SK-N-SH (cell line): ENCODE measurements at regions of chr1 and their contacts with region 1.

Region 1: DNA sequence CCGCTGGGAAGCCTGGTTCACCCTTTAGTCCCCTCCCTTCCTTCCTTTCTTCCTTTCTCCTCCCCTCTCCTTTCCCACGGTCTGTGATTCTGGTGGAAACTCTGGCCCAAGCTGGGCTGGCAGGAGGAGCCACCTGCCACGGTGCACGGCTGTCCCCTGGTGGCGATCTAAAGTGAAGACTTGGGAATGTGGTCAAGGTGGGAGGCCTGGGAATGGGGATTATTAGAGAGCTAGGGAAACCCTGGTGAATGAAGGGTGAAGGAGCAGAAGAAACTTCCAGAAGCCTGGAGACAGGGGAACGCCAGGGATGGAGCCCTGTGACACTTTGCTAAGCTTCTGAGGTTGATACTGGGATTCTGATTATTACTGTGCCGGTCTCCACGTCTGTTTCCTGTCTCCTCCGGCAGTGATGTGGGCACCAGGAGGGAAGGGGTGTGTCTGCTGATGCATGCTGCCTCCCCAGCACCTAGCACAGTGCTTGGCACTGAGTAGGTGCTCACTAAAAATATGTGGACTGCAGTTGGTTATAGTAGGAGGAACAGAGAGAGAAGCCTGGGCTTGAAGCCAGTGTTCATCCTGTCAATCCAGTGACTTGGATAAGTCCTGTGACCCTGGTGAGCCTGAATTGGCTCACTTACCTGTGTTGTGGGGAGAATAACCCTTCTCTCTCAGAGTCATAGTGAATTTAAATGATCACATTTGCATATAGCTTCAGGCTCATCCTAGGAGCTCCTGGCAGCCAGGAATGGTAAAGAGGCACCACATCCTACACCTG is 71.2 kb upstream of the NBPF3 start:
- DNase-seq: peak; percentile 84
- H3K4me3 ChIP-seq: peak overlapping the region in 1 of 2 experiments; percentile 51; a peak in 1 of 4 replicates
- H3K27ac ChIP-seq: no peak overlapping the region
- H3K4me1 ChIP-seq: no peaks in the 10 kb centered on the region; a peak in 1 of 4 replicates
- H3K27me3 ChIP-seq: no peaks in the 10 kb centered on the region
- CTCF ChIP-seq: peak; percentile 99
- EP300 ChIP-seq: no peak
- RAD21 ChIP-seq: peak; percentile 100

Region 2: DNA sequence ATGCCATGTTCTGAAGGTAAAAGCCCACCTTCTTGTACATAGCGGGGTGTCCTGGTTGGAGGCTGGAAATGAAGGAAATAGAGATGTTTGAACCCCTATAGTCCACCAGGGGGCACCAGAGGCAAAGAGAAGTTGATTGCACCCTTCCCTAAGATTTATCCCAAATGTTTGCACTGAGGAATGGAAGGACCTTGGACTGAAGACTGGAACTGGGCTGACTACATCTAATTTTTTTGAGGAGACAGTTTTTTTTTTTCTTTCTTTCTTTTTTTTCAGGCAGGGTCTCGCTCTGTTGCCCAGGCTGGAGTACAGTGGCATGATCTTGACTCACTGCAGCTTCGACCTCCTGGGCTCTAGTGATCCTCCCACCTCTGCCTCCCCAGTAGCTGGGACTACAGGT is 136.7 kb before region 1 on chr1:
- CTCF ChIA-PET with region 1: interaction called, 201 read pairs
- POLR2A ChIA-PET with region 1: interaction called, 6 read pairs
- DNase-seq: peak; percentile 81
- H3K4me3 ChIP-seq: no peak overlapping the region
- H3K27ac ChIP-seq: no peak overlapping the region
- H3K4me1 ChIP-seq: no peaks in the 10 kb centered on the region
- H3K27me3 ChIP-seq: no peaks in the 10 kb centered on the region
- CTCF ChIP-seq: peak; percentile 84
- EP300 ChIP-seq: no peak
- RAD21 ChIP-seq: peak; percentile 93

Region 3: GRCh38 chr1:21294266-21294989 is 74.3 kb before region 1 on chr1:
- CTCF ChIA-PET with region 1: interaction called, 12 read pairs
- POLR2A ChIA-PET with region 1: no interaction called
- DNase-seq: no peak
- H3K4me3 ChIP-seq: no peak overlapping the region
- H3K27ac ChIP-seq: peak overlapping the region in 1 of 2 experiments; percentile 23; a peak in 1 of 4 replicates
- H3K4me1 ChIP-seq: peaks cover 0 to 40% of the 10 kb centered on the region in 2 experiments; a peak in 2 of 4 replicates
- H3K27me3 ChIP-seq: no peaks in the 10 kb centered on the region
- CTCF ChIP-seq: no peak
- EP300 ChIP-seq: no peak
- RAD21 ChIP-seq: no peak

Region 4: GRCh38 chr1:21344750-21345443 is 23.8 kb before region 1 on chr1:
- CTCF ChIA-PET with region 1: interaction called, 20 read pairs
- POLR2A ChIA-PET with region 1: no interaction called
- DNase-seq: peak; percentile 60
- H3K4me3 ChIP-seq: peak overlapping the region; percentile 73 to 78
- H3K27ac ChIP-seq: peak overlapping the region in 1 of 2 experiments; percentile 65; a peak in 1 of 4 replicates
- H3K4me1 ChIP-seq: peaks cover 0 to 48% of the 10 kb centered on the region in 2 experiments; a peak in 1 of 4 replicates
- H3K27me3 ChIP-seq: no peaks in the 10 kb centered on the region; the same call in 1 of the 2 replicates
- CTCF ChIP-seq: no peak
- EP300 ChIP-seq: no peak
- RAD21 ChIP-seq: no peak

Region 5: GRCh38 chr1:21490774-21491553 is 122.3 kb after region 1 on chr1:
- CTCF ChIA-PET with region 1: interaction called, 12 read pairs
- POLR2A ChIA-PET with region 1: no interaction called
- DNase-seq: peak; percentile 60
- H3K4me3 ChIP-seq: no peak overlapping the region
- H3K27ac ChIP-seq: no peak overlapping the region
- H3K4me1 ChIP-seq: no peaks in the 10 kb centered on the region
- H3K27me3 ChIP-seq: no peaks in the 10 kb centered on the region; the same call in 1 of the 2 replicates
- CTCF ChIP-seq: peak; percentile 60
- EP300 ChIP-seq: no peak
- RAD21 ChIP-seq: peak; percentile 57

Region 6: GRCh38 chr1:21594935-21595897 is 226.5 kb after region 1 on chr1:
- CTCF ChIA-PET with region 1: interaction called, 52 read pairs
- POLR2A ChIA-PET with region 1: no interaction called
- DNase-seq: peak; percentile 86
- H3K4me3 ChIP-seq: no peak overlapping the region; a peak in 1 of 4 replicates
- H3K27ac ChIP-seq: no peak overlapping the region
- H3K4me1 ChIP-seq: peaks cover 0 to 13% of the 10 kb centered on the region in 2 experiments; a peak in 2 of 4 replicates
- H3K27me3 ChIP-seq: no peaks in the 10 kb centered on the region
- CTCF ChIP-seq: peak; percentile 73
- EP300 ChIP-seq: no peak
- RAD21 ChIP-seq: peak; percentile 74